ENCODE measurements at regions of chr2 and their contacts with region 1.

Region 1: DNA sequence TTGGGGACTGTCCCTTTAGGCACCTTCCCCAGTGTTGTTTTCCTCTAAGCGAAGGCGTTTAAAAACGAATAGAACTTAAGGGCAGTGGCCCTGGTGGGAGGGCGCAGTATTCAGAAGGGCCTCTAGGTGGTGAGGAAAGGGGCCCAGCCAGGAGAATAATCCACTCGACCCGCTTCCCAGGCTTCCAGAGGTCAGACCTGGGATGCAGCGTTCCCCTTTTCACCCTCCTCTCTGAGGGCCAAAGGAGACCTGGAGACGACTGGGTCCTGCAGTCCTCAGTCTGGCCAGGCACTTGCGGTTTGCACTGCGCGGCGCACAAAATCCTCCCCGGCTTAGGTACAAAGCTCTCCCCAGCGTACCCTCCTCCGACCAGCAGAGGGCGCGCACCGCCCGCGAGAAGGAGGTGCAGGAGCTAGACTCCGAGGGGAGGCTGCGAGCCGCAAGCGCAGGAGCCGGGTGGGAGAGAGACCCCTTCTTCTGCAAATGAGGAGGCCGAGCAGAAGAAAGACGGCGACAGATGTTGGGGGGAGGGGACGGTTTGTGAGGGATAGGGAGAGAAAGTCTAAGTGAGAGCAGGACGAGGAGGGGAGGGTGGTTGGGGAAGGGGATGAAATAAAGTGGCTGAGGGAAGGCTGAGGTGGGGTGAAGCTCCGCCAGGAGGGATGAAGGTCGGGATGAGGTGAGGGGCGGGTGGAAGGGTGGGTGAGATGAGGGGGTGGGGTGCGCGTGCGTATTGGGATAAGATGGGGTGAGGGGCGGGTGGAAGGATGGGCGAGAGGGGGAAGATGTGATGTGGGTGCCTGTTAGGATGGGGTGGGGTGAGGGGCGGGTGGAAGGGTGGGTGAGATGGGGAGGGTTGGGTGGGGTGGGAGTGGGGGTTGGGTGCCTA is 4.9 kb downstream of the FEV start:
- DNase-seq: peak; percentile 96
- ATAC-seq: peak; percentile 80
- H3K4me3 Mint-ChIP-seq: peak overlapping the region; percentile 60
- H3K27ac Mint-ChIP-seq: no peak overlapping the region
- H3K4me1 Mint-ChIP-seq: peaks cover 25% of the 10 kb centered on the region
- H3K27me3 Mint-ChIP-seq: peaks cover 99% of the 10 kb centered on the region
- CTCF ChIP-seq: peak; percentile 74; the same call in 1 of the 2 replicates

Region 2: DNA sequence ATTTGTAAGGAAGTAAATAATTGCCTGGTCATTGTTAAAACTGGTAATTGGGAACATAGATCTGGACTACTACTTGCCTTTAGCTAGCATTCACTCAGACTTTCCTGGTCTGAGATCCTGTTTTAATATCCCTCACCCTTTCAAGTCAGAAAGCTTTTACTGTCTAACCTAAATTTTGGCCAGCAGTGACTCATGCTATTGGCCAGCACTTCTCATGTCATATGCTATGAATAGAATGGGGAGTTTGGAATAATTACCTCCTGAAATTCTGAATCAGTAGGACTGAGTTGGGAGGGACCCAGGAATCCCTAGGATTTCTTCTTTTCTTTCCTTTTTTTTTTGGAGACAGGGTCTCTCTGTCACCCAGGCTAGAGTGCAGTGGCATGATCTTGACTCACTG is 288.9 kb before region 1 on chr2:
- CTCF ChIA-PET with region 1: no interaction called
- POLR2A ChIA-PET with region 1: no interaction called
- DNase-seq: no peak
- ATAC-seq: no peak
- H3K4me3 Mint-ChIP-seq: no peak overlapping the region
- H3K27ac Mint-ChIP-seq: no peak overlapping the region
- H3K4me1 Mint-ChIP-seq: no peaks in the 10 kb centered on the region
- H3K27me3 Mint-ChIP-seq: no peaks in the 10 kb centered on the region
- CTCF ChIP-seq: no peak

Region 3: DNA sequence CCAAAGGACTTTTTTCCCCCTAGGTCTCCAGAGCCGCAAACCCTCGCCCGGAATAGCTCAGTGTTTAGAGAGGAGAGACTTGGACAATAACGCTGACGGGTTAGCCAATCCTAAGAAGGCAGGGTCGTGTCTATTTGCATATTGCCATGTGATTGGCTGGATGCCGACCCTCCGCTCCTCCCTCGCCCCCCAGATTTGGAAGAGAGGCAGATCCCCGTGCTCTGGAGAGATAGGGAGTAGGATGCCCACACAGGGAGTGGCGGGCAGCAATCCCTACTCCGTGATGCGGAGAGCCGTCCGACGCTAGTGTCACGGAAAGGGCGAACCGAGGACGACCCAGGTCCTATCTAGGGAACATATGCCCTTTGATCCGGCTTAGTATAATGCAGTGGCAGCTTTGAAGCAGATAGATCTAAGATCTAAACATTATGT is 119.1 kb before region 1 on chr2:
- CTCF ChIA-PET with region 1: interaction called, 13 read pairs
- POLR2A ChIA-PET with region 1: no interaction called
- DNase-seq: peak; percentile 87
- ATAC-seq: peak; percentile 94
- H3K4me3 Mint-ChIP-seq: peak overlapping the region; percentile 69
- H3K27ac Mint-ChIP-seq: no peak overlapping the region
- H3K4me1 Mint-ChIP-seq: peaks cover 38% of the 10 kb centered on the region
- H3K27me3 Mint-ChIP-seq: peaks cover 93% of the 10 kb centered on the region
- CTCF ChIP-seq: no peak

Region 4: DNA sequence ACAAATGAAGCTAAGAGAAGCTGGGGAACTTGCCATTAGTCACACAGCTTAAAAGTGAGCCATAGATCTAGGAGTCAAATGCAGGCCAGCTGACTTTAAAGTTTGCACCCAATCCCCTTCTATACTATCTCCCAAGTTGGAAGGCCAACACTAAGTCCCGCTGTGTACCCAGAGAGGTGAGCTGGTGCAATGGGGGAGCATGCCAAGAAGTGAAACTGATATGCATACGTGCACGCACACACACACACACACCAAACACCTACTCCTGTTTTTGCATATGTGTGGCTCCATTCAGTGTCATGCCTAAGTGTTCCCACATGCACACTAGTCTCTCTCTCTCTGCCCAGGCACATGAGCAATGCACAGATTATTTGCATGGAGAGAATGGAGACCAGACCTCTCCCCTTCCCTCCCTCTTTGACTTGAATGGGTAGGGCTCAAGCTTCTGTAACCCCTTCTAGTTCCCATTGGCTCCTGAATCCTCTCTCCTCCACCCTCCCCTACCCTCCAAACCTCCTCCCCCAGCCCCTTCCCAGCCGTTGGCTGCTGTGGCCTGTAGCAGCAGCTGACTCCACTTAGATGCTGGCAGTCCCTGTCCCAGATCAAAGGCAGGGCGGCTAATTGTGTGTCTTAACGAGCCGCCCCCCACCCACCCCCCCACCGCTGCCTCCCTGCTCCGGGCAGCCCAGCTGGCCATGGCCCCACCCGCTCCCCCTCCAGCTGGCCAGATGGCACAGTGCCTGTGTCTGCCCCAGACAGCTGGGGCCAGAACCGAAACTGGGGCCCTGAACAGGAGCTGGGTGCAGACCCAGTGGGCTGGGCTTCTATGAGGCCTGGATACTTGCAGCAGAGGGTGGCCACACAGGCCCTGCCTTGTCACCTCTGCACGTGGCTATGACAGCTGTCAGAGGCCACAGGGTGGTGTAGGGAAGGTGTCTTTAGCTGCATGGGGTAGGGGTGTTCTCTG is 93.8 kb before region 1 on chr2:
- CTCF ChIA-PET with region 1: interaction called, 98 read pairs
- POLR2A ChIA-PET with region 1: no interaction called
- DNase-seq: no peak
- ATAC-seq: no peak
- H3K4me3 Mint-ChIP-seq: no peak overlapping the region
- H3K27ac Mint-ChIP-seq: no peak overlapping the region
- H3K4me1 Mint-ChIP-seq: no peaks in the 10 kb centered on the region
- H3K27me3 Mint-ChIP-seq: peaks cover 99% of the 10 kb centered on the region
- CTCF ChIP-seq: no peak

Region 5: GRCh38 chr2:218908721-218909619 is 71.1 kb before region 1 on chr2:
- CTCF ChIA-PET with region 1: interaction called, 11 read pairs
- POLR2A ChIA-PET with region 1: no interaction called
- DNase-seq: peak; percentile 96
- ATAC-seq: peak; percentile 97
- H3K4me3 Mint-ChIP-seq: peak overlapping the region; percentile 75
- H3K27ac Mint-ChIP-seq: no peak overlapping the region
- H3K4me1 Mint-ChIP-seq: peaks cover 13% of the 10 kb centered on the region
- H3K27me3 Mint-ChIP-seq: peaks cover 63% of the 10 kb centered on the region
- CTCF ChIP-seq: no peak

Region 6: GRCh38 chr2:218995972-218996711 is 16.1 kb after region 1 on chr2:
- CTCF ChIA-PET with region 1: interaction called, 158 read pairs
- POLR2A ChIA-PET with region 1: no interaction called
- DNase-seq: peak; percentile 93
- ATAC-seq: peak; percentile 49
- H3K4me3 Mint-ChIP-seq: peak overlapping the region; percentile 60
- H3K27ac Mint-ChIP-seq: no peak overlapping the region
- H3K4me1 Mint-ChIP-seq: peaks cover 26% of the 10 kb centered on the region
- H3K27me3 Mint-ChIP-seq: peaks cover 100% of the 10 kb centered on the region
- CTCF ChIP-seq: peak; percentile 90

Region 7: GRCh38 chr2:219104107-219105035 is 124.3 kb after region 1 on chr2:
- CTCF ChIA-PET with region 1: interaction called, 14 read pairs
- POLR2A ChIA-PET with region 1: no interaction called
- DNase-seq: peak; percentile 41
- ATAC-seq: peak; percentile 98
- H3K4me3 Mint-ChIP-seq: no peak overlapping the region
- H3K27ac Mint-ChIP-seq: 0 out of 2 replicates have a peak overlapping the region, but pooled peaks have one; percentile 41
- H3K4me1 Mint-ChIP-seq: peaks cover 3% of the 10 kb centered on the region
- H3K27me3 Mint-ChIP-seq: no peaks in the 10 kb centered on the region
- CTCF ChIP-seq: peak; percentile 75

Measured in WTC11 (cell line).